Motor neuron (in vitro differentiated cells): ENCODE measurements at regions of chr17 and their contacts with region 1.

Region 1: DNA sequence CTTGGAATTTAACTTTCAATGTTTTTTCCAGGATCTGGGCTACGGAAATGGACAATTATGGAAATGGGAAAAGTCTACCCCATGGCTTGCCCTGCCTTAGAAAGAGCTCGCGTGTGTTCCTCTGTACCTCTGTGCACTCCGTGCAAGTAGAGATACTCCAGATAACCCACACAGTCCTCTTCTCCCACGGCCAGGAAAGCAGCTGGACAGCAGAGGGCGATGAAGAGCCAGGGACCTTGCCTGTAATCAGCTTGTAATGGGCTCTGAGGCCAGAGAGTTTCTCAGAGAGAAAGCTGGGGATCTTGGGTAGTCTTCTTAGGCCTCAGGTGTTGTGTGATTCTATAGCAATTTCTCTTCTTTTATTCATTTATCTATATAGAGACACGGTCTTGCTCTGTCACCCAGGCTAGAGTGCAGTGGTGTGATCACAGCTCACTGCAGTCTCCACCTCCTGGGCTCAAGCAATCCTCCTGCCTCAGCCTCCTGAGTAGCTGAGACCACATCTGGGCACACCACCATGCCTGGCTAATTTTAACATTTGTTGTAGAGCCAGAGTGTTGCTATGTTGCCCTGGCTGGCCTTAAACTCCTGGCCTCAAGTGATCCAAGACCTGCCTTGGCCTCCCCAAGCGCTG is 2.4 kb upstream of the SOCS7 start:
- ATAC-seq: peak; percentile 34 to 48 (median 40)
- H3K4me3 ChIP-seq: no peak overlapping the region
- H3K27ac ChIP-seq: peak overlapping the region in 1 of 2 donors; percentile 70
- H3K4me1 ChIP-seq: peaks cover 9 to 21% of the 10 kb centered on the region in 2 donors

Region 2: DNA sequence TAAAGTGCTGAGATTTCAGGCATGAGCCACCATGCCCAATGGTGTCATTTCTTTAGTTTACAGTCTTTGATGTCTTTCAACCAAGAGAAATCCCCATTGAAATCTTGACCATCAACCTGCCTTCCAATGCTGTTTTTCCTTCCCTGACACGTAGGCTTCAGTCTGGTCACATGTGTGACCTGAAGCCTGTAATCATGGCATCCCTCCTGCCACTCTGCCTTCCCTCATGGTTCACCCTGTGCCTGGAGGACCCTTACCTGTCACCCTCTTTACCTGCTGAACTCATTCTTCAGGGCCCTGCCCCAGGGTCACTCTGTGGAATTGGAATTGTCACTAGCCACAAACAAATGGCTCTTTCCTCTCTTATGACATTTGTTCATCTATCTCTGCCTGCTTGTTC is 61.0 kb after region 1 on chr17:
- in situ Hi-C with region 1: loop called in 2 of 9 experiments (anchors 5 to 10 kb)
- ATAC-seq: no peak
- H3K4me3 ChIP-seq: no peak overlapping the region
- H3K27ac ChIP-seq: no peak overlapping the region
- H3K4me1 ChIP-seq: peaks cover 11 to 13% of the 10 kb centered on the region in 2 donors

Region 3: GRCh38 chr17:38415250-38416194 is 66.3 kb after region 1 on chr17:
- in situ Hi-C with region 1: loop called in 2 of 9 experiments (anchors 5 to 10 kb)
- ATAC-seq: peak; percentile 39 to 81 (median 75)
- H3K4me3 ChIP-seq: peak overlapping the region in 2 of 5 donors; percentile 15 to 17
- H3K27ac ChIP-seq: peak overlapping the region; percentile 94 to 98
- H3K4me1 ChIP-seq: peaks cover 36 to 51% of the 10 kb centered on the region in 2 donors

Region 4: GRCh38 chr17:38444151-38444550 is 94.9 kb after region 1 on chr17:
- in situ Hi-C with region 1: loop called in 1 of 9 experiments (anchors 25 kb)
- ATAC-seq: peak; percentile 79 to 99 (median 92)
- H3K4me3 ChIP-seq: no peak overlapping the region
- H3K27ac ChIP-seq: no peak overlapping the region
- H3K4me1 ChIP-seq: peaks cover 6 to 14% of the 10 kb centered on the region in 2 donors

Region 5: GRCh38 chr17:38464723-38465390 is 115.6 kb after region 1 on chr17:
- in situ Hi-C with region 1: no loop called
- ATAC-seq: peak; percentile 84 to 96 (median 88)
- H3K4me3 ChIP-seq: peak overlapping the region; percentile 16 to 41 (median 32)
- H3K27ac ChIP-seq: peak overlapping the region; percentile 57 to 76
- H3K4me1 ChIP-seq: peaks cover 28 to 32% of the 10 kb centered on the region in 2 donors